ENCODE measurements at regions of chr15 and their contacts with region 1.

Region 1: DNA sequence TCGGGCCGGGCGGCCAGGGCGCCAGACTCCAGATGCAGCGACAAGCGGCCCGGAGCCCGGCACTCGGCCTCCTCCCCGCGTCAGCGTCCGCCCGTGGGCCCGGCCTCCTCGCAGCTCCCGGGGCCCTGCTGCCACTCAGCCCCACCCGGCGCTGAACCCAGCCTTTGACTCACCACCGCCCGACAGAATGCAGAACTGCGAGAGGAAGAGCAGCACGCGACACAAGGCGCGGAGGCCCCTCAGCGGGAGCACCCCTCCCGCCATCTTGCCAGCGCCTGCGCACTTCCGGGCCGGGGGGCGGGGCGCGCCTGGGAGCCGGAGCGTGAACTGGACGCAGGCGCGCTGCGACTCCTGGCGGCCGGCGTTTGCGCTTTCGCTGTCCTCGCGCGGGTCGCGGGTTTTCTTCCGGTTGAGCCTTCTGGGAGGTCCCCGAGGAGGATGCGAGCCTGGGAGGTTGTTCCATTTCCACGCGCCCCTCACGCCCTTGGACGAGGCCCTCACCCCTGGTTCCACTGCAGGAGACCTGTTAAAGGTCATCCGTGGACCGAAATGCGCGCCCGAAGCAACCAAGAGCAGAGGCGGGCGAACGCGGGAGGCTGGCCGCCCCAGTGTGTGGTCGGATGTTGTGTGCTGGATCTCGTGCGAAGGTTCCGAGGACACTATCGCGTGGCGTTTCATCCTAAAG is at the start of gene TM2D3:
- DNase-seq: peak; percentile 96
- H3K4me3 Mint-ChIP-seq: peak within 1 kb of the TSS; percentile 83
- H3K27ac Mint-ChIP-seq: peak within 1 kb of the TSS; percentile 90
- H3K4me1 Mint-ChIP-seq: peaks cover 38% of the 10 kb centered on the region
- H3K27me3 Mint-ChIP-seq: no peaks in the 10 kb centered on the region
- total RNA-seq, gene TM2D3: 41.7 to 48.1 TPM

Region 2: GRCh38 chr15:101277038-101277882 is 375.0 kb before region 1 on chr15 and contains the start of gene SELENOS:
- CTCF ChIA-PET with region 1: no interaction called
- POLR2A ChIA-PET with region 1: no interaction called
- intact Hi-C with region 1: loop called (anchors 5 kb)
- DNase-seq: peak; percentile 90
- H3K4me3 Mint-ChIP-seq: peak within 1 kb of the TSS; percentile 92
- H3K27ac Mint-ChIP-seq: peak within 1 kb of the TSS; percentile 81
- H3K4me1 Mint-ChIP-seq: peaks cover 29% of the 10 kb centered on the region
- H3K27me3 Mint-ChIP-seq: no peaks in the 10 kb centered on the region
- total RNA-seq, gene SELENOS: 30.9 to 31.7 TPM

Region 3: GRCh38 chr15:101294731-101295606 is 357.3 kb before region 1 on chr15 and contains the start of gene SNRPA1:
- CTCF ChIA-PET with region 1: interaction called, 4 read pairs
- POLR2A ChIA-PET with region 1: interaction called, 8 read pairs
- intact Hi-C with region 1: loop called (anchors 1 kb)
- DNase-seq: peak; percentile 98
- H3K4me3 Mint-ChIP-seq: peak within 1 kb of the TSS; percentile 95
- H3K27ac Mint-ChIP-seq: peak within 1 kb of the TSS; percentile 98
- H3K4me1 Mint-ChIP-seq: peaks cover 38% of the 10 kb centered on the region
- H3K27me3 Mint-ChIP-seq: no peaks in the 10 kb centered on the region
- total RNA-seq, gene SNRPA1: 167 to 173 TPM

Region 4: DNA sequence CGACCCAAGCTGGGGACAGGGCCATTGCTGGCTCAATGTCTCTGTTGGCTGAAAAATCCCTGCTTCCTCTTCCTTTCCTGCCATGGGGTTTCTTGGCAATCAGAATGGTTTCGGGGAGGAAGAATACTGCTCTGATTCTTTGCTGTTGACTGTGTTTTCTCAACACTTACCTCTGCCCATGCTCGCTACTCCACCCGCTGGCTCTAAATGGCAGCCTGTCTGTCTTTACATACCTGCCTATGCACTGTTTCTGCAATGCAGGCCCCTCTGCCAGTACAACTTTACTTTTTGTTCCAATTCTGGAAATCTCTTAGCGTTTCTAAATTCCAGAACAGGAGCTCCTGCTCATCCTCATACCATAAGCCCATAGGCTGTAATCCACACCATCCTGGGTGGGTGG is 318.8 kb before region 1 on chr15:
- CTCF ChIA-PET with region 1: no interaction called
- POLR2A ChIA-PET with region 1: no interaction called
- intact Hi-C with region 1: loop called (anchors 1 kb)
- DNase-seq: no peak
- H3K4me3 Mint-ChIP-seq: no peak overlapping the region
- H3K27ac Mint-ChIP-seq: no peak overlapping the region
- H3K4me1 Mint-ChIP-seq: peaks cover 12% of the 10 kb centered on the region
- H3K27me3 Mint-ChIP-seq: no peaks in the 10 kb centered on the region

Region 5: DNA sequence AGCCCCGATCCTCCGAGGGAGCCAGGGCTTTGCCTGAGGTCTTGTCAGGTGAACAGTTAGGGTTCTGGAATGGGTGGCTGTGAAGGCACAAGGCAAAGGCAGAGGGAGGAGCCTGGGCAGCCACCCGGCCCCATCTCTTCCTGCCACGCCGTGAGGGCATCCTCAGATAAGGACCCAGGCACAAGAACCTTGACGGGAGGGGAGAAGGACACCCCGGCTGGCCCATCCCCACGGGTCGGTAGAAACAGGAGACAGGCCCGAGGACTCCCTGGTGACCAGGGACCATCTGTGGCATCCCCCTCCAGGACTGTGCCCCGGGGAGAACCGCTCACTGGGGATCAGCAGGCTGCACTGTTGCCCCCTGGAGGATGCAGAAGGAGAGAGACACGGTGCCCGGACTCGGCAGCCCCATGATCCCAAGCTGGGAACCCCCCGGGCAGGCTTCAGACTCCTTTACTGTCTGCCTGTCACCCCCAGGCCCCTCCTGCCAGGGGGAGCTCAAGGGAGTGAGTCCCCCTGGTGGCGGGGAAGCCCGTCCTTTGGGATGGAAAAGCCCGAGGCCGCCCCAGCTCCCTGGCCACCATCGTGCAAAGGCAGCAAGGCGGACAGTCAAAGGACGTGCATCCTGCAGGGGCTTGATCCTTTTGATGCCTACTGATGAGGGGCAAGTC is 150.4 kb before region 1 on chr15:
- CTCF ChIA-PET with region 1: no interaction called
- POLR2A ChIA-PET with region 1: no interaction called
- intact Hi-C with region 1: loop called (anchors 5 kb)
- DNase-seq: peak; percentile 70
- H3K4me3 Mint-ChIP-seq: no peak overlapping the region
- H3K27ac Mint-ChIP-seq: no peak overlapping the region
- H3K4me1 Mint-ChIP-seq: peaks cover 6% of the 10 kb centered on the region
- H3K27me3 Mint-ChIP-seq: peaks cover 15% of the 10 kb centered on the region

Region 6: DNA sequence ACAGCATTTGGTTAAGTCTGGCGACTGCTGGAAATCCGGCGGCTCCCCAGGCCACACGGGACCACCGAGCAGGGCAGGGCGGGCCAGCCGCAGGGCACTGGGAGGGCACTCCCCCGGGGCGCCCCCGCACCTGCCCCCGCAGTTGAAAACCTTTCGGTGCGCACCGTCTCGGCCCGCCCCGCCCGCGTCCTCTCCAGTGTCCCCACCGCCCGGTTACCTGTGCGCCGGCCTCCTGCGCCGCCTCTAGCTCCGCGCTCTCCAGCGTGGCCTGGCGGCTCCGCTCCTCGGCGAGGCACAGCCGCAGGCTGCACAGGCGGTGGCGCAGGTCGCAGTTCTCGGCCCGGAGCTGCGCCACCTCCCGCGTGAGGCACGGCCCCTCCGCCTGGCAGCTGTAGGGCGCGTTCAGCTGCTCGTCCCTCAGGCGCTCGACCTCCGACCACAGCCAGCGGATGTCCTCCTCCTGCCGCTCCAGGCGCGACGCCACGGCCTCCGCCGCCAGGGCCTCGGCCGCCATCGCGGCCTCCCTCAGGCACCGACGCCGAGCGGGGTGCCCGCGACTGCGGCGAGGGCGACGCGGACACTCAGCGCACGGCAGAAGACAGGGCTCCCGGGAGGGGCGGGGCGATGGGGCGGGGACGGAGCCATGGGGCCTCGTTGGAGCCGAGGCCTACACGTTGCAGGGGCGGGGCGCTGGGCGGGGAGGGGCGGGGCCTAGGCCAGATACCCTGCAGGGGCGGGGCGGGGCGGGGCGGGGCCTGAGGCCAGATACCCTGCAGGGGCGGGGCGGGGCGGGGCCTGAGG is 71.8 kb after region 1 on chr15 and contains the start of gene TARS3:
- CTCF ChIA-PET with region 1: interaction called, 4 read pairs
- POLR2A ChIA-PET with region 1: interaction called, 5 read pairs
- intact Hi-C with region 1: loop called (anchors 5 kb)
- DNase-seq: peak; percentile 97
- H3K4me3 Mint-ChIP-seq: peak within 1 kb of the TSS; percentile 87
- H3K27ac Mint-ChIP-seq: peak within 1 kb of the TSS; percentile 85
- H3K4me1 Mint-ChIP-seq: peaks cover 14% of the 10 kb centered on the region
- H3K27me3 Mint-ChIP-seq: no peaks in the 10 kb centered on the region
- total RNA-seq, gene TARS3: 10.8 to 11.7 TPM

Measured in activated CD4-positive, alpha-beta memory T cell treated with anti-CD3 and anti-CD28 coated beads for 36 hours (primary cell).